Activated naive CD8-positive, alpha-beta T cell treated with anti-CD3 and anti-CD28 coated beads, Interleukin-2, amount 10 ng/mL, durations not matched to agents 7 days and 5 days (primary cell): ENCODE measurements at regions of chr12 and their contacts with region 1.

Region 1: GRCh38 chr12:4293299-4293965 is 19.9 kb downstream of the CCND2 start:
- DNase-seq: no peak
- ATAC-seq: peak; percentile 63
- H3K4me3 Mint-ChIP-seq: peak overlapping the region; percentile 73
- H3K27ac Mint-ChIP-seq: peak overlapping the region; percentile 92
- H3K4me1 Mint-ChIP-seq: peaks cover 63% of the 10 kb centered on the region
- H3K27me3 Mint-ChIP-seq: no peaks in the 10 kb centered on the region

Region 2: GRCh38 chr12:4282892-4283511 is 10.4 kb before region 1 on chr12:
- POLR2A ChIA-PET with region 1: interaction called, 22 read pairs
- DNase-seq: no peak
- ATAC-seq: peak; percentile 12
- H3K4me3 Mint-ChIP-seq: no peak overlapping the region
- H3K27ac Mint-ChIP-seq: no peak overlapping the region
- H3K4me1 Mint-ChIP-seq: peaks cover 78% of the 10 kb centered on the region
- H3K27me3 Mint-ChIP-seq: no peaks in the 10 kb centered on the region

Region 3: GRCh38 chr12:4307593-4308333 is 14.3 kb after region 1 on chr12:
- POLR2A ChIA-PET with region 1: no interaction called
- DNase-seq: no peak
- ATAC-seq: no peak
- H3K4me3 Mint-ChIP-seq: no peak overlapping the region
- H3K27ac Mint-ChIP-seq: peak overlapping the region; percentile 32
- H3K4me1 Mint-ChIP-seq: peaks cover 9% of the 10 kb centered on the region
- H3K27me3 Mint-ChIP-seq: no peaks in the 10 kb centered on the region

Region 4: GRCh38 chr12:4330203-4330602 is 36.8 kb after region 1 on chr12:
- POLR2A ChIA-PET with region 1: no interaction called
- DNase-seq: no peak
- ATAC-seq: no peak
- H3K4me3 Mint-ChIP-seq: no peak overlapping the region
- H3K27ac Mint-ChIP-seq: no peak overlapping the region
- H3K4me1 Mint-ChIP-seq: peaks cover 12% of the 10 kb centered on the region
- H3K27me3 Mint-ChIP-seq: no peaks in the 10 kb centered on the region